Aorta (tissue), 5 donors: ENCODE measurements at regions of chr4 and their contacts with region 1.

Region 1: GRCh38 chr4:24856586-24856985 is 56.3 kb downstream of the CCDC149 start:
- DNase-seq: peak; percentile 76 to 85
- ATAC-seq: peak; percentile 62
- H3K4me3 ChIP-seq: no peak overlapping the region
- H3K27ac ChIP-seq: peak overlapping the region; percentile 64 to 70
- H3K4me1 ChIP-seq: peaks cover 5 to 22% of the 10 kb centered on the region in 2 donors
- H3K27me3 ChIP-seq: no peaks in the 10 kb centered on the region

Region 2: DNA sequence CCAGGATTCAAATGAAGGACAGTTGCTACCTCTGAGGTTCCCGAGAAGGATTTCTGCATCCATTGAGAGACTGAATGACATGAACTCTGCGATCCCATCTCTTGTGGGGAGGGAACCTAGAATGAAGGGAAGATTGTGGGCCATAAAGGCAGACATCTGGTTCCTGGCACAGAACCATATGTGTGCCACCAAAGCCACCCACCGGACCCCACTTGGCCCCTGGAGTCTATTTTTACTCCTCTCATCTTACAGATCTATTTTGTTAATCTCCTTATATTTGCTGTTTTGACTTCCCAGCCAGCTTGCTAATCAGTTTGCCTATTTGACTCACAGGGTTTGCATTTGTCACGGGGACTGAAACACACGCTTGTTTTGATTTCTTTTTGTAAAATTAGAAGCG is 53.9 kb before region 1 on chr4:
- intact Hi-C with region 1: loop called (anchors 1 to 5 kb)
- DNase-seq: no peak
- ATAC-seq: no peak
- H3K4me3 ChIP-seq: no peak overlapping the region
- H3K27ac ChIP-seq: no peak overlapping the region
- H3K4me1 ChIP-seq: peaks cover 2 to 10% of the 10 kb centered on the region in 2 donors
- H3K27me3 ChIP-seq: no peaks in the 10 kb centered on the region

Region 3: GRCh38 chr4:24912252-24913118 is 55.9 kb after region 1 on chr4 and contains the start of gene CCDC149:
- intact Hi-C with region 1: loop called (anchors 2 to 5 kb)
- DNase-seq: peak; percentile 73 to 88
- ATAC-seq: peak; percentile 76
- H3K4me3 ChIP-seq: peak within 1 kb of the TSS; percentile 48 to 69
- H3K27ac ChIP-seq: peak within 1 kb of the TSS; percentile 83 to 95
- H3K4me1 ChIP-seq: no peaks in the 10 kb centered on the region
- H3K27me3 ChIP-seq: no peaks in the 10 kb centered on the region
- total RNA-seq, gene CCDC149: 31.3 to 43.4 TPM